ENCODE measurements at regions of chr5 and their contacts with region 1.

Region 1: GRCh38 chr5:135466178-135467050 is 14.3 kb upstream of the TIFAB start:
- DNase-seq: peak; percentile 42
- H3K4me3 ChIP-seq: no peak overlapping the region
- H3K27ac ChIP-seq: no peak overlapping the region
- H3K4me1 ChIP-seq: no peaks in the 10 kb centered on the region
- H3K27me3 ChIP-seq: no peaks in the 10 kb centered on the region
- CTCF ChIP-seq: peak; percentile 73 to 97

Region 2: DNA sequence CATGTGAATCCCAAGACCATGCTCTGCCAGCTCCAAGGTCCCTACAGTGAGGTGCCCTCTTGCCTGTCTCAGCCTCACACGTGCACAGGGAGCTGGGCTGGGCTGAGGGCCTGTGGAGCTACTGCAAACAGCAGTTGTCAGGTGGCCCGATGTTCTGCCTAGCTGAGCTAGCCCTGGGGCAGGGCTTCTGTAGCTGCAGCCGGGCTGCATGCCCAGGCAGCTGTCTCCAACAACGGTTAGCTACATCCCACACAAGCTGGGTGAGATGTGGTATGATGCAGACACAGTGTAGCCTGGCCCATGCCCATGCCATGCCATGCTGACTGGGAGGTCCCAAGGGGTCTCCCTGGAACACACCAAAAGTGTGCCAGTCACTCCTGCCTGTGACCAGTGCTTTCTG is 129.3 kb before region 1 on chr5:
- CTCF ChIA-PET with region 1: no interaction called
- dilution Hi-C with region 1: no loop called
- in situ Hi-C with region 1: no loop called
- intact Hi-C with region 1: no loop called
- DNase-seq: peak; percentile 43
- H3K4me3 ChIP-seq: no peak overlapping the region
- H3K27ac ChIP-seq: no peak overlapping the region
- H3K4me1 ChIP-seq: peaks cover 16% of the 10 kb centered on the region
- H3K27me3 ChIP-seq: no peaks in the 10 kb centered on the region
- CTCF ChIP-seq: no peak

Region 3: DNA sequence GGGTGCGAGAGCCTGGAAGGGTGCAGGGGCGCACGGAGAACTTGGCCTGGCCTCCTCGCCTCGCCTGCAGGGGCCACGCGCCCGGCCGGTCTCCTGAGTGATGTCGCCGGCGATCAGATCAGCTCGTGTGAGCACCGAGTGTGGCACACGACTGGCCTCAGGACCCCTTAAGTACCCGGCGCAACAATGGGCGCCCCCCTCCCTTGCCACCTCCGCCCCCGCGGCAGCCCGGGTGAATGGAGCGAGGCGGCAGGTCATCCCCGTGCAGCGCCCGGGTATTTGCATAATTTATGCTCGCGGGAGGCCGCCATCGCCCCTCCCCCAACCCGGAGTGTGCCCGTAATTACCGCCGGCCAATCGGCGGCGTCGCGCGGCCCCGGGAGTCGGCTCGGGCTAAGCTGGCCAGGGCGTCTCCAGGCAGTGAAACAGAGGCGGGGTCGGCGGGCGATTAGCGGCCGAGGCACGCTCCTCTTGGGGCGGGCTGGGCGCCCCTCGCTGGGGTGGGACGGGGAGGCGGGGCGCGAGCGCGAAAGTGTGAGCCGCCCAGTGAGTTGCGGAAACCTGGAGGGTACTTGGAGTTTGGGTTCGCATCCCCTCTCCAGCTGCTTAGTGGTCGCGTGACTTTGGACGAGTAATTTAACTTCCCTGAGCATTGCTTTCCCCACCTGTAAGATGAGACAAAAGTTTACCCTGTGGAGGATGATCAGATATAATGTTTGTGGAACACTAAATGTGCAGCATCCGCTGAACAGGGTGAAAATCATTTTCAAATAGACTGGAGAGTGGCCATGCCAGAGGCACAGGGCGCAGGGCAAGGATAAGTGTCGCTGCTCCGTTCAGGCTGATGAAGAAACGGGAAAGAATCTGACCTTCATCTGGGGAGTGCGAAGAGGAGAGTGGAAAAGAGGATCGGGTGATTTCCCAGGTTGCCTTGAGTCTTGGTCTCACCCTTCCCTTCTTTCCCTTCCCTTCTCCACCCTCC is 69.7 kb after region 1 on chr5 and contains the start of gene NEUROG1:
- CTCF ChIA-PET with region 1: no interaction called
- dilution Hi-C with region 1: no loop called
- in situ Hi-C with region 1: no loop called
- intact Hi-C with region 1: no loop called
- DNase-seq: no peak
- H3K4me3 ChIP-seq: peak within 1 kb of the TSS; percentile 9 to 23 (median 22)
- H3K27ac ChIP-seq: no peak within 1 kb of the TSS
- H3K4me1 ChIP-seq: peaks cover 10% of the 10 kb centered on the region
- H3K27me3 ChIP-seq: peaks cover 24% of the 10 kb centered on the region
- CTCF ChIP-seq: no peak
- total RNA-seq, gene NEUROG1: not detected

Region 4: DNA sequence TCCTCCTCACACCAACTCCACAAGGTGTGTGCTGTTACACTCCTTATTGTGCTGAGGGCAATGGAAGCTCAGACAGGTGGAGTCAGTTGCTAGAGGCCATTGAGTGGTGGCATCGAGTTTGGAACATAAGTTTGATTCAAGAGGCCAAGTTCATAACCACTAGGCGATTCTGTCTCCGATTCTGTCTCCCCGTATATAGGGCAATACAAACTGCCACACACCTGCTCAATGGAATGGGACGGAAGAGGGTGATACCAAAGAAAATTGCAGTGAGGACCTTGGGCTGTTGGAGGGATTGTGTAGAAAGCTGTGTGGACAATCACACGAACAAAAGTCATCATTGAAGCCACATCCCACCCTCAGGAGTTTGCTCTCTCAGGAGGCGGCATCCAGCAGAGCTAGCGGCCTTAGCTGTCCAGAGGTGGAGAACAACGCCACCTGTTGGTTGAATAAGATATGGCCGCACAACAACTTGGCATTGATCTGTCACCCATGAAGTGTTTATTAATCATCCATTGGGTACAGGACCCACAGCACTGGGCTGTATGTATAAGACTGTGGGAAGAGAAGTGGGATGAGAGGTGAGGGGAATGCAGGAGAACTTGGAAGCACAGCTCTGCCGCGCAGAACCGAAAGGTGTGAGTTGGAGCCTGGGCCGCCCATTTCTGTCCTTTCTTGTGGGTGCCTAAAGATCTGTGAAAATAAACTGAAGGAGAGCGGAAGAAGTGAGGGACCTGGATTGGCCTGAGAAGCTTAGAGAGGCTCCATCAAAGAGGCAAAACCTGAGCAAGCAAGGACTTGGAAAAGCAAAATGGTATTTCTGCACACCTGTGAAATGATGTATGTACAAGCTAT is 85.4 kb after region 1 on chr5:
- CTCF ChIA-PET with region 1: interaction called, 20 read pairs
- dilution Hi-C with region 1: loop called (anchors 5 kb)
- in situ Hi-C with region 1: loop called (anchors 5 kb)
- intact Hi-C with region 1: loop called (anchors 1 kb)
- DNase-seq: peak; percentile 54
- H3K4me3 ChIP-seq: no peak overlapping the region
- H3K27ac ChIP-seq: no peak overlapping the region
- H3K4me1 ChIP-seq: no peaks in the 10 kb centered on the region
- H3K27me3 ChIP-seq: peaks cover 6% of the 10 kb centered on the region
- CTCF ChIP-seq: peak; percentile 82 to 86

Region 5: DNA sequence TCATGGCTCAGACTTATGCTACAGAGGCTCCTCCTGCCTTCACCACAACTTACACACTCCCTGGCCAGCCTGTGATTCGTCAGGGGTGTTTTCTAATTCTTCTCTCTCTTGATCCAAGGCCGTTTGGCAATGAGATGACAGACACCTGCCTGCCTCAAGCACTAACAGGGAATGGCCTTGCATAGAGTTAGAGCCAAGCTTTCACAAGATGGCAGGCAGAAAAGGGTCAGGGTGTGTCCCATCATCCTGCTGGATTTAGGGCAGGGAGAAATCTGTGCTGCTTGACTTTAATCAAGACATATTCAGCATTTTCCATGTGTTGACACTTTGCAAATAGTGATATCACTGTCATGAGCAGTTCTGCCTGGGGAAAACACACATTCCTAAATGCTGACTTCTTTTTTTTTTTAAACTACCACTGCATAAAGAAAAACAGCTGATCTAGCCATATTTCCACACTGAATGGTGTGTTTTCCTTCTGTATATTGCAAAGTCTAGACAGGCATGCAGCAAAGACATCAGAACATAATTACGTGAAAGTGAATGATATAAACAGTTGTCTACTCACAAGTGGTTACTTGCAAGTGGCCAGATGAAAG is 273.1 kb after region 1 on chr5:
- CTCF ChIA-PET with region 1: no interaction called
- dilution Hi-C with region 1: no loop called
- in situ Hi-C with region 1: loop called in 1 of 2 experiments (anchors 10 kb)
- intact Hi-C with region 1: no loop called
- DNase-seq: peak; percentile 31
- H3K4me3 ChIP-seq: no peak overlapping the region
- H3K27ac ChIP-seq: no peak overlapping the region
- H3K4me1 ChIP-seq: no peaks in the 10 kb centered on the region
- H3K27me3 ChIP-seq: no peaks in the 10 kb centered on the region
- CTCF ChIP-seq: no peak

Region 6: GRCh38 chr5:135864503-135865435 is 398.4 kb after region 1 on chr5:
- CTCF ChIA-PET with region 1: no interaction called
- dilution Hi-C with region 1: no loop called
- in situ Hi-C with region 1: no loop called
- intact Hi-C with region 1: no loop called
- DNase-seq: no peak
- H3K4me3 ChIP-seq: no peak overlapping the region
- H3K27ac ChIP-seq: no peak overlapping the region
- H3K4me1 ChIP-seq: no peaks in the 10 kb centered on the region
- H3K27me3 ChIP-seq: peaks cover 2% of the 10 kb centered on the region
- CTCF ChIP-seq: no peak

Region 7: GRCh38 chr5:136232316-136232715 is 765.9 kb after region 1 on chr5:
- CTCF ChIA-PET with region 1: no interaction called
- dilution Hi-C with region 1: no loop called
- in situ Hi-C with region 1: no loop called
- intact Hi-C with region 1: no loop called
- DNase-seq: no peak
- H3K4me3 ChIP-seq: no peak overlapping the region
- H3K27ac ChIP-seq: no peak overlapping the region
- H3K4me1 ChIP-seq: no peaks in the 10 kb centered on the region
- H3K27me3 ChIP-seq: peaks cover 2% of the 10 kb centered on the region
- CTCF ChIP-seq: no peak